ENCODE measurements at regions of chr19 and their contacts with region 1.

Region 1: DNA sequence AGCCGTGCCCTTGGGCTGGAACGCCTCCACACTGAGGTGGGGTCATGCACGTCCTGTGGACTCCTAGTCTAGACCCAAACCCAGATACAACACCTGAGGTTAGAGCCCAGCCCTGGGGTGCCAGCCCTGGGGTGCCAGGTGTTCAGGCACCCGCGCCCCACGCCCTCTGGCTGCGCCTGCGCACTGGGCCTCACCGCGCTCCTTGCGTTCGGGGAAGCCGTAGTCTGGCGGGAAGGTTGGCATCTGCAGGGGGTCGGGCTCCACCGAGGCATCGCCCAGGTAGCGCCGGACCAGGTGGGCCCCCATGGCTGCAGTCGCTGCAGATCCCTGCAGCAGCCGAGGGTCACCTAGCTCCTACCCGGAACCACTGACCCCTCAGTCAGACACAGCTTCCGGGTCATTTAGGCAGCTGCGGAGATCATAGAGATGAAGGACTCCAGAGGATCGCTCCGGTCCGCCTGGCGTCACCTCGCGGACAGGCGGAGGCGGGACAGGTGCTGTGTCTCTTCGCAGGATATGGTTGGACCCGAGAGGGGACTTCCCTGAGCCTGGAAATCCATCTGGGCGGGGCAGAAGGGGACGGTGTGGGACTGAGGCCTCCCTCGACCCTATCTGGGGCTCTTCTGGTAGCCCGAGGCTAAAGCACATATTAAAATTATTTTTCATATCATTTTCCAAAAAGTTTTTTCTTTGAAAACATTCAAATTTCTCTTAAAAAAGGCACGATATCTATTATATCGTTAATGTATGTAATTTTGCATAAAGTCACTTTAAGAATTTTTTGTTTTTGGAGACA is at the start of gene NDUFB7:
- DNase-seq: peak; percentile 97
- H3K4me3 ChIP-seq: peak within 1 kb of the TSS; percentile 98
- H3K27ac ChIP-seq: peak within 1 kb of the TSS; percentile 63
- H3K4me1 ChIP-seq: peaks cover 38% of the 10 kb centered on the region
- CTCF ChIP-seq: peak; percentile 90
- total RNA-seq, gene NDUFB7: 282 and 301 TPM in 2 replicates

Region 2: DNA sequence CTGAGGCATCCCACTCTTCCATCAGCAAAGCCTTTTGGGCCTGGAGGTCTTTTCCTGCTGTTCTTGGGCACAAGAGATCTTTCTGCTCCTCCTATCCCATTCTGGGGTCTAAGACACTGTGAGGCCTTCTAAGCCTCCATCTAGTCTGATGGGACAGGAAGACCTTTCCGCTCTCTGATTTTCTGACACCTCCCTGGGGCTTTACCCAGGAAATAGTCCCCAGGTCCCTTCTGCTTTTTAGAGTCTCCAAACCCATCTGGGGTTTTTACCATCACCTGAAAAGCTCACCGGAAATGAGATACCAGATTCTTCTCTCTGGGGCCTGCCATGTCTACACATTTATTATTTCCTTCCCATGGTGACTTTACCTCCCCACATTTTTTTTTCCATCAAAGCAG is 32.1 kb after region 1 on chr19:
- CTCF ChIA-PET with region 1: interaction called, 4 read pairs
- POLR2A ChIA-PET with region 1: interaction called, 5 read pairs
- intact Hi-C with region 1: loop called (anchors 1 kb)
- DNase-seq: peak; percentile 94
- H3K4me3 ChIP-seq: peak overlapping the region; percentile 46
- H3K27ac ChIP-seq: peak overlapping the region; percentile 96
- H3K4me1 ChIP-seq: peaks cover 44% of the 10 kb centered on the region
- CTCF ChIP-seq: no peak

Region 3: GRCh38 chr19:14689598-14690503 is 118.0 kb after region 1 on chr19 and contains the start of gene ZNF333:
- CTCF ChIA-PET with region 1: interaction called, 70 read pairs
- POLR2A ChIA-PET with region 1: interaction called, 92 read pairs
- intact Hi-C with region 1: loop called (anchors 1 kb)
- DNase-seq: peak; percentile 95
- H3K4me3 ChIP-seq: peak within 1 kb of the TSS; percentile 80
- H3K27ac ChIP-seq: peak within 1 kb of the TSS; percentile 86
- H3K4me1 ChIP-seq: peaks cover 49% of the 10 kb centered on the region
- CTCF ChIP-seq: no peak
- total RNA-seq, gene ZNF333: 26.1 and 27.3 TPM in 2 replicates

Region 4: DNA sequence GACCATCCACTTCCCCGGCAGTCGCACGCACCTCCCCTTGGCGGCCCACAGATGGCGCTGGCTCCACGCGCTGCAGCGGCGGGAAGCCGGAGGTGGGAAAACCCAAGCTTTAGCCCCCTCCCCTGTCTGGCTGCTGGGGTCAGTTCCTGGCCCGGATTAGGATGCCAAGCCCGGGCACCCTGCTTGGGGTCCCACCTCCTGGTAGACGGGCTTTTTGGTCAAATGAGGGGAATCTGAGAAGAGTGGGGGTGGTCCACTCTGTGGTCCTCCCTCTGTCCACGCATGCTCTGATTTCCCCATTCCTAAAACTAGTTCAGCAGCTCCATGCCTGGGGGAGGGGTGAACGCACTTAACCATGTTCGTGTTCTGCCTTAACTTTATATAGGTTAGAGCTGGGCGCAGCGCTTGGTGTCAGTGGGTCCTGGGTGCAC is 214.5 kb after region 1 on chr19:
- CTCF ChIA-PET with region 1: no interaction called
- POLR2A ChIA-PET with region 1: no interaction called
- intact Hi-C with region 1: loop called (anchors 2 kb)
- DNase-seq: peak; percentile 34
- H3K4me3 ChIP-seq: no peak overlapping the region
- H3K27ac ChIP-seq: no peak overlapping the region
- H3K4me1 ChIP-seq: peaks cover 4% of the 10 kb centered on the region
- CTCF ChIP-seq: peak; percentile 91

Region 5: DNA sequence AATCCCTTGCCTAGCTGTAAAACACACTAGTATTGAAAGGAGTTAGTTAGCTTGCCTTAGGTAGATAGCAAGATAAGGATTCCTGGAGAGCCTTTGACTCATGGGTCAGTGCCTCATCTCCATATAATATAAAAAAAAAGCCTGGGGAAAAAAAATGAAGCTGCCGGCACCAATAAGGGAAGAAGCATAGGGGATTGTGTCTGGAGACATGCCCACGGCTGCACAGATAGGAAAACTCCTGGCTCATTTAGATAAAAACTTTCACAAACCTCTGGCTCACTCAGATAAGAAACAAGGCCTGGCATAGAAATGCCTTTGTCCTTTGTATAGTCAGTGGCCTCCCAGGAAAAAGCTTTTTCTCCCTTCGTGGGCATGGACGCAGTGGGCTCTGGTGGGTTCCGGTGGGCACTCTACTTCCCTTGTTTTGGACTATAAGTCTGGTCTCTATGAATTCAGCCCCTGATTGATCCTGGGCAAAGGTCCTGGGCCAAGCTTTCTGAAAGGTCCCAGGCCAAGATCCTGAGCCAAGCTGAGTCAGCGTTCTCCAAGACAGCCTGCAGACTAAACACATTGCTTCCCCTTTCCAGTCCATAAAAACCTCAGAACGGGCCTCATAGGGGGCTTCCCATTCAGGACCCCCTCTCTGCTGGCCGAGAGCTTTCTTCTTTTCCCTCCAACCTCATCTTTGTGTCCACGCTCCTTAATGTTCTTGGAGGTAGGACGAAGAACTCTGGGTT is 318.9 kb after region 1 on chr19:
- CTCF ChIA-PET with region 1: no interaction called
- POLR2A ChIA-PET with region 1: no interaction called
- intact Hi-C with region 1: loop called (anchors 1 kb)
- DNase-seq: no peak
- H3K4me3 ChIP-seq: no peak overlapping the region
- H3K27ac ChIP-seq: no peak overlapping the region
- H3K4me1 ChIP-seq: no peaks in the 10 kb centered on the region
- CTCF ChIP-seq: no peak

Measured in OCI-LY7 (cell line).